ENCODE measurements at regions of chr9 and their contacts with region 1.

Region 1: DNA sequence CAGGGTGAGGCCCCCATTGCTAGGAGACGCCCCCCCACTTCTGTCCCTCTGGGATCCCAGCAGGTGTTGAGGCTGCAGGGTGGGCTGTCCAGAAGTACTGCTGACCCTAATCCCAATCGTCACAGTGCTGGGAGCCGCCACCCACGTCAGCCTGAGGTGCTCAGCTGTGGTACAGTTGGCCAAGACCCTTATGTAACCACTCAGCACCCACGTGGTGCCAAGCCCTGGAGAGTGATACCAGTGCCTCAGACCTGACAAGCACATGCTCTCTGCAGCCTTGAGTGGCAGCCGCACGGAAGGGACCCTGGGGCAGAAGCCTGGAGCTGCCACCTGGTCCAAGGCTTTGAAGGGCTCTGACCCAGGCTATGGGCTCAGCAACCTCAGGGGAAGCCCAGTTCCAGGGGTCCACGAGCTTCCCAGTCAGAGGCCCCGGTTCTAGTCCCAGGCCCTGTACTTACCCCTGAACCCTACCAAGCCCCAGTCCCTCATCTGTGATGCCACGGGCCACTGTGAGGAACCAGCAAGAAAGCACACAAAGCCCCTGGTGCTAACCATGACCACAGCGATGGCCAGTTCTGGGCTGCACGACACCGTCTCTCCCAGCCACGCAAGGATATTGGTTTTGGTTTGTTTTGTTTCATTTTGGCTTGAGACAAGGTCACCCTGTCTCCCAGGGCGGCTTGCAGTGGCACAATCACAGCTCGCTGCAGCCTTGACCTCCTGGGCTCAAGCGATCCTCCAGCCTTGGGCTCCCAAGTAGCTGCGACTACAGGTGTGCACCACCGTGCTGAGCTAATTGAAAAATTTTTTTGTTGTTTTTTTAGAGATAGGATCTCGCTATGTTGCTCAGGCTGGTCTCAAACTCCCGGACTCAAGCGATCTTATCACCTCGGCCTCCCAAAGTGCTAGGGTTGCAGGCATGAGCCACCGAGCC is 50.7 kb downstream of the DBH start:
- DNase-seq: peak; percentile 76
- ATAC-seq: peak; percentile 48

Region 2: GRCh38 chr9:133589454-133590227 is 97.3 kb before region 1 on chr9:
- intact Hi-C with region 1: loop called (anchors 5 kb)
- DNase-seq: peak; percentile 35
- ATAC-seq: no peak

Measured in Right ventricle myocardium inferior (tissue), 1 donor.